CD4-positive, alpha-beta T cell (primary cell): ENCODE measurements at regions of chr20 and their contacts with region 1.

Region 1: GRCh38 chr20:59042796-59043660 is 442 bp upstream of the PRELID3B start:
- DNase-seq: peak; percentile 87 to 97 (median 94)
- ATAC-seq: peak; percentile 94
- H3K4me3 ChIP-seq: peak overlapping the region; percentile 85
- H3K4me3 Mint-ChIP-seq: peak overlapping the region; percentile 92
- H3K27ac ChIP-seq: peak overlapping the region; percentile 67 to 77
- H3K27ac Mint-ChIP-seq: peak overlapping the region; percentile 91
- H3K4me1 ChIP-seq: peaks cover 41% of the 10 kb centered on the region
- H3K4me1 Mint-ChIP-seq: peaks cover 48% of the 10 kb centered on the region
- H3K27me3 ChIP-seq: no peaks in the 10 kb centered on the region
- H3K27me3 Mint-ChIP-seq: no peaks in the 10 kb centered on the region
- CTCF ChIP-seq: no peak

Region 2: DNA sequence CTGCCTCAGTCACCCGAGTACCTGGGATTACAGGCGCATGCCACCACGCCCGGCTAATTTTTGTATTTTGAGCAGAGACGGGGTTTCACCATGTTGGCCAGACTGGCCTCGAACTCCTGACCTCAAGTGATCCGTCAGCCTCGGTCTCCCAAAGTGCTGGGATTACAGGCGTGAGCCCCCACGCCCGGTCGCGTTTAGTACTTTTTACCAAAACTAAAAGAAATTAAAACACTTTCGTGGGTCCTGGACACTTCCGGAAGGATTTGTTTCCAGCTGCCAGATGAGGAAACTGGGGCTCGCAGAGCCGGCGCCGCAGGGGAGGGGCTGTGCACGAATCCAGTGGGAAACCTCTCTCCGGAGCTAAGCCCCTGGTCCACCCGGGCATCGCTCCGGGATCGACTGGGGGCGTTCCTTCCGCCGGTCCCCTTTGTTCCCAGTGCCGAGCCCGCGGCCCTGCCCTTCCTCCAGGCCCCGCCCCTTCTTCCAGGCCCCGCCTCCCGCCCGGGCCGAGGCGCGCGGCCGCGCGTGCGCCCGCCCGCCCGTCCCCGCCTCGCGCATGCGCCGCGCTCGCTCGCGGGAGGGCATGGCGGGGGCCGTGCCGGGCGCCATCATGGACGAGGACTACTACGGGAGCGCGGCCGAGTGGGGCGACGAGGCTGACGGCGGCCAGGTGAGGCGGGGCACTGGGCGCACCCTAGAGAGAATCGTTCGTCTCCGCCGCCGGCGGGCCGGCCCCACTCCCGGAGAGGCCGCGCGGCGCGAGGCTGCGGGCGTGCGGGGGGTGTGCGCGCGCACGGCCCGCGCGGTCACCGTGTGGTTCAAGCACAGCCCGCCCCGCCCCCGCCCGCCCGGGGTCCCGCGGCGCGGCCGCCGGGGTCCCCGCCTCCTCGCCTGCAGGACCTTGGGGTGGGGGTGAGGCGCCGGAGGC is 62.1 kb before region 1 on chr20 and contains the start of gene NELFCD:
- CTCF ChIA-PET with region 1: no interaction called
- POLR2A ChIA-PET with region 1: no interaction called
- intact Hi-C with region 1: loop called in 1 of 2 experiments (anchors 2 kb)
- DNase-seq: peak; percentile 79 to 95 (median 88)
- ATAC-seq: peak; percentile 92
- H3K4me3 ChIP-seq: peak within 1 kb of the TSS; percentile 82
- H3K4me3 Mint-ChIP-seq: peak within 1 kb of the TSS; percentile 92
- H3K27ac ChIP-seq: peak within 1 kb of the TSS; percentile 41 to 52
- H3K27ac Mint-ChIP-seq: peak within 1 kb of the TSS; percentile 87
- H3K4me1 ChIP-seq: peaks cover 42% of the 10 kb centered on the region
- H3K4me1 Mint-ChIP-seq: peaks cover 43% of the 10 kb centered on the region
- H3K27me3 ChIP-seq: no peaks in the 10 kb centered on the region
- H3K27me3 Mint-ChIP-seq: no peaks in the 10 kb centered on the region
- CTCF ChIP-seq: no peak
- total RNA-seq, gene NELFCD: 95.7 to 97.0 TPM

Region 3: DNA sequence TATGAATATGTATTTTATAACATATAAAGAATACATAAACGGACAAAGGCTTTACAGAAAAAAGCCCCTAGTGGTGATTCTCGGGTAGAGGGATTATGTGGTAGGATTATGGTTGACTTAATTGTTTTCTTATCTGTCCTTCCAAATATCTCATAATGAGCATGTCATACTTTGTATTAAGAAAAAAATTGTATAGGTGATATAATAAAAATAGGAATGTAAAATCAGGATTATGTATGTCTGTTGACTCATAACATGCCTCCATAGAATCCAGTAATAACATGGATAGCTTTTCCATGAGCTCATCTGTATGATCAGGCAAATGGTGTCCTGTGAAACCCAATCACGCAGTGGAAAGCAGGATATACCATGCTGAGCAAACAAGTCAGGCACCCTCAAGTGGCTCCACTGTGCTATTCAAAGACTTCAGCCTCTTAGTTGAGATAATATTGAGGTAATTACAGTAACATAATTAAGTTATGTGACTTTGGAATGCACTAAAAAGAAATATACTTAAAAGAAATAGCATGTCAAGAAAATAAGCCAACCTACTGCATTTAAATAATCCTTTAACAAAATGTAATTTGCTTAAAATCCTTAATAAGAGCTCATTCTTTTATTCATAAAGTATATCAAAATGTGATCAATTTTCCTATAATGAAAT is 39.2 kb after region 1 on chr20:
- CTCF ChIA-PET with region 1: no interaction called
- POLR2A ChIA-PET with region 1: no interaction called
- intact Hi-C with region 1: loop called in 1 of 2 experiments (anchors 5 kb)
- DNase-seq: peak in 2 of 14 experiments; percentile 30 to 31
- ATAC-seq: no peak
- H3K4me3 ChIP-seq: no peak overlapping the region
- H3K4me3 Mint-ChIP-seq: no peak overlapping the region
- H3K27ac ChIP-seq: no peak overlapping the region
- H3K27ac Mint-ChIP-seq: no peak overlapping the region
- H3K4me1 ChIP-seq: no peaks in the 10 kb centered on the region
- H3K4me1 Mint-ChIP-seq: no peaks in the 10 kb centered on the region
- H3K27me3 ChIP-seq: peaks cover 0 to 7% of the 10 kb centered on the region in 2 experiments
- H3K27me3 Mint-ChIP-seq: peaks cover 18% of the 10 kb centered on the region
- CTCF ChIP-seq: peak; percentile 60